ENCODE measurements at regions of chr18 and their contacts with region 1.

Region 1: GRCh38 chr18:77061946-77062517 is 70.6 kb downstream of the MBP start:
- DNase-seq: no peak
- H3K4me3 ChIP-seq: peak overlapping the region; percentile 41
- H3K4me3 Mint-ChIP-seq: peak overlapping the region; percentile 43 to 86 (median 81)
- H3K27ac ChIP-seq: peak overlapping the region; percentile 73
- H3K27ac Mint-ChIP-seq: peak overlapping the region; percentile 93 to 99 (median 98)
- H3K4me1 ChIP-seq: peaks cover 89% of the 10 kb centered on the region
- H3K4me1 Mint-ChIP-seq: peaks cover 85 to 89% (median 89%) of the 10 kb centered on the region in 3 donors
- H3K27me3 ChIP-seq: no peaks in the 10 kb centered on the region
- H3K27me3 Mint-ChIP-seq: no peaks in the 10 kb centered on the region

Region 2: DNA sequence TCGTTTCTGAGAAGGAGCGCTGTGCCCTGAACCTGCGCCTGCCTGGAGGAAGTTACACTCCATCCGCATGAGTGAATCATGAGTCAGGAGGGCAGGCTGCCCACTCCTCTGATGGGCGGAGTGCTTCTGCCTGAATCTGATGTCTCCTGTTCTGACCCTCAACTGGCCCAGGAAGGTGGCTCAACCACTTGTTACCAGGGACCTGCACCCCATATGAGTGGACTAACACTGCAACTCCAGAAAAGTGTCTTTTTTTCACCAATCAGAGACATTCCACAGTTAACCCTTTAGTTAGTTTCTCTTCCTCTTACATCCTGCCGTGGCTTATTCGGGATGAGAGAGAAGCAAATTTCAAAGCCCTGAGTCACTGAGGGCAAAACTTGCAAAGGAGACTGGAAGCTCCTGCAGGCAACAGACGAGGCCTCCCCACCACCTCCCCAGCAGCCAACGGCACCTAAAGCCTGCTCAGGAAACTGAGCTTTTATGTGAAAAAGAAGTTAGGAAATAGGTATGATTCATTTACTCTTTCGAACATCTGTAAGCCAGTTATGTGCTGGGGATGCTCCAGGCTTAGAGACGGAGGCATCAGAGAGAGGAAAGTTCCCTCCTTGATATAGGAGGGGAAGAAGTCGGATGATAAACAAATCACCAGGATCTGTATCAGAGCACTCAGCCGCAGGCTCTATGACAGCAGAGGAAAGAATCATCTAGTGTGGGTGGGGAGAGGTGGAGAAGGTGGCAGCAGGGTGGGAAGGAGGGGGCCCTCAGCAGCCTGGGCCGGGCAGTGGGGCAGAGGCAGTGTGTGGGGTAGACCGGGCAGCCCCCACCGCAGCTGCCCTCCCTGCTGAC is 39.6 kb after region 1 on chr18:
- CTCF ChIA-PET with region 1: interaction called, 13 read pairs
- POLR2A ChIA-PET with region 1: interaction called, 22 read pairs
- DNase-seq: peak in 4 of 5 donors; percentile 23 to 63 (median 38)
- H3K4me3 ChIP-seq: peak overlapping the region; percentile 42
- H3K4me3 Mint-ChIP-seq: peak overlapping the region; percentile 73 to 87 (median 80)
- H3K27ac ChIP-seq: peak overlapping the region; percentile 55
- H3K27ac Mint-ChIP-seq: peak overlapping the region; percentile 93 to 98 (median 96)
- H3K4me1 ChIP-seq: peaks cover 99% of the 10 kb centered on the region
- H3K4me1 Mint-ChIP-seq: peaks cover 90 to 100% (median 100%) of the 10 kb centered on the region in 3 donors
- H3K27me3 ChIP-seq: no peaks in the 10 kb centered on the region
- H3K27me3 Mint-ChIP-seq: no peaks in the 10 kb centered on the region

Measured in CD8-positive, alpha-beta memory T cell (primary cell).